Lower leg skin (tissue), 4 donors: ENCODE measurements at regions of chr4 and their contacts with region 1.

Region 1: GRCh38 chr4:16264798-16265197 is 38.5 kb upstream of the TAPT1 start:
- DNase-seq: no peak
- H3K4me3 ChIP-seq: no peak overlapping the region
- CTCF ChIP-seq: no peak
- POLR2A ChIP-seq: no peak

Region 2: GRCh38 chr4:16034010-16034829 is 230.6 kb before region 1 on chr4:
- intact Hi-C with region 1: loop called (anchors 5 kb)
- DNase-seq: no peak
- H3K4me3 ChIP-seq: no peak overlapping the region
- CTCF ChIP-seq: no peak
- POLR2A ChIP-seq: no peak

Region 3: GRCh38 chr4:16329125-16329796 is 64.5 kb after region 1 on chr4:
- intact Hi-C with region 1: loop called (anchors 2 kb)
- DNase-seq: no peak
- H3K4me3 ChIP-seq: no peak overlapping the region
- CTCF ChIP-seq: no peak
- POLR2A ChIP-seq: no peak